ENCODE measurements at regions of chr2 and their contacts with region 1.

Region 1: DNA sequence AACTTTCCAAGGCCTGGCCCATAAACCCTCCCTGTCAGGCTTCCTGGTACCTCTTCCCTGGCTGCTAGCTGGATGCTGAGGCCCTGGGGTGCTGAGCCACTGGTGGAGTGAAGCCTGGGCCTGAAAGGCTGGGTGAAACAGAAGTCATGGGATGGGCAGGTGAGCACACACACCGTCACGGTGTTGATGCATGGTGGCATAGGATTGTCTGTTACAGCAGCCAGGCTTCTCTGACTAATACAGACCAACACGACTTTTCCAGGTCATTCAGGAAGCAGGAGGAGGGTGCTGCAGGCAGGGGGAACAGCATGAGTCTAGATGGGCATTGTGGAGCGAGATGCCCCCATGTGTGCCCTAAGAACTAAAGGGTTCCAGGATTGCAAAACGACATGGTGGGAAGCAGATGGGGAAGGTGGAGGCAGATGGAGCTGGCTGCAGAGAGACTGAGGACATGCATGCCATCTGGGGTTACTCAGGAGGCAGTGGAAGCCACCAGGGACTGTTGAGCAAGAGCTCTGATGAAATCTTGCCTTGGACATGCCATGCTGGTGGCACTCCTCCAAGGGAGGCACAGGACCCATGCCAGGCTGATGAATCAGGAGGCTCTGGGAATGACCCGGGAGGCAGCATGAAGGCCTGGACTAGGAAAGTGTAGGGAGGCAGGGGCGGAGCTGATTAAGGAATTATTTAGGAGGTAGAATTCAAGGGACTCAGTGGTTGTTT is 480.9 kb downstream of the TSN start:
- DNase-seq: peak; percentile 91
- H3K4me3 Mint-ChIP-seq: peak overlapping the region; percentile 3
- H3K27ac Mint-ChIP-seq: peak overlapping the region; percentile 57
- H3K4me1 Mint-ChIP-seq: peaks cover 39% of the 10 kb centered on the region
- H3K27me3 Mint-ChIP-seq: peaks cover 40% of the 10 kb centered on the region
- CTCF ChIP-seq: no peak

Region 2: DNA sequence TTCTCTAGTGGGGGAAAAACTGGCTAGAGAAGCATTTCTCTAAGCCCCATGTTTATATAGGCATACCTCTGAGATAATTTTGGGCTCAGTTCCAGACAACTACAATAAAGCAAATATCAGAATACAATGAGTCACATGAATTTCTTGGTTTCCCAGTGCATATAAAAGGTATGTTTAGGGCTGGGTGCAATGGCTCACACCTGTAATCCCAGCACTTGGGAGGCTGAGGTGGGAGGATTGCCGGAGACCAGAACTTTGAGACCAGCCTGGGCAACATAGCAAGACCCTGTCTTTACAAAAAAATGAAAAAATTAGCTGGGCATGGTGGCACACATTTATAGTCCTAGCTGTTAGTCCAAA is 458.6 kb before region 1 on chr2:
- CTCF ChIA-PET with region 1: no interaction called
- intact Hi-C with region 1: loop called (anchors 2 kb)
- DNase-seq: peak; percentile 45
- H3K4me3 Mint-ChIP-seq: peak overlapping the region; percentile 1
- H3K27ac Mint-ChIP-seq: no peak overlapping the region
- H3K4me1 Mint-ChIP-seq: peaks cover 37% of the 10 kb centered on the region
- H3K27me3 Mint-ChIP-seq: no peaks in the 10 kb centered on the region
- CTCF ChIP-seq: no peak

Region 3: GRCh38 chr2:122433123-122433754 is 196.9 kb after region 1 on chr2:
- CTCF ChIA-PET with region 1: no interaction called
- intact Hi-C with region 1: loop called (anchors 5 kb)
- DNase-seq: peak; percentile 47
- H3K4me3 Mint-ChIP-seq: no peak overlapping the region
- H3K27ac Mint-ChIP-seq: no peak overlapping the region
- H3K4me1 Mint-ChIP-seq: peaks cover 13% of the 10 kb centered on the region
- H3K27me3 Mint-ChIP-seq: peaks cover 20% of the 10 kb centered on the region
- CTCF ChIP-seq: no peak

Measured in Calu3 (cell line).